Activated naive CD4-positive, alpha-beta T cell treated with anti-CD3 and anti-CD28 coated beads for 36 hours (primary cell): ENCODE measurements at regions of chr2 and their contacts with region 1.

Region 1: DNA sequence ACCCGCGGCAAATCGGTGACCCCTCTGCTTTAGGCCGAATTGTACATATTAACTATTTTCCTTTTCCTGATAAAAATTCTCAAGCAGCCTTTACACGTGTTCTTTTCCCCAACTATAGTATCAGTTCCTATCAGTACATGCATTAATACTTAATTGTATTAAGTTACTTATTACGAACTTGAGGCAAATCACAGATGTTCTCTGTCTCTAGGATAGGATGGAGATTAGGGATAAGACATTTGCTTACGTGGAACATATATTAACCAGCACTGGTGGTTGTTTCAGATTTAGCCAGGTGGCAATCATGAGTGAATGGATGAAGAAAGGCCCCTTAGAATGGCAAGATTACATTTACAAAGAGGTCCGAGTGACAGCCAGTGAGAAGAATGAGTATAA is 675 bp downstream of the GEMIN6 start:
- DNase-seq: no peak
- H3K4me3 Mint-ChIP-seq: peak overlapping the region; percentile 95
- H3K27ac Mint-ChIP-seq: peak overlapping the region; percentile 89
- H3K4me1 Mint-ChIP-seq: peaks cover 11% of the 10 kb centered on the region
- H3K27me3 Mint-ChIP-seq: peaks cover 10% of the 10 kb centered on the region

Region 2: GRCh38 chr2:38535744-38536506 is 242.8 kb before region 1 on chr2:
- CTCF ChIA-PET with region 1: no interaction called
- intact Hi-C with region 1: loop called (anchors 1 kb)
- DNase-seq: peak; percentile 84
- H3K4me3 Mint-ChIP-seq: peak overlapping the region; percentile 54
- H3K27ac Mint-ChIP-seq: no peak overlapping the region
- H3K4me1 Mint-ChIP-seq: no peaks in the 10 kb centered on the region
- H3K27me3 Mint-ChIP-seq: peaks cover 5% of the 10 kb centered on the region

Region 3: GRCh38 chr2:38765149-38765548 is 13.5 kb before region 1 on chr2:
- CTCF ChIA-PET with region 1: no interaction called
- intact Hi-C with region 1: no loop called
- DNase-seq: no peak
- H3K4me3 Mint-ChIP-seq: no peak overlapping the region
- H3K27ac Mint-ChIP-seq: no peak overlapping the region
- H3K4me1 Mint-ChIP-seq: peaks cover 1% of the 10 kb centered on the region
- H3K27me3 Mint-ChIP-seq: no peaks in the 10 kb centered on the region

Region 4: GRCh38 chr2:38875576-38876367 is 97.1 kb after region 1 on chr2 and contains the starts of genes DHX57 and MORN2:
- CTCF ChIA-PET with region 1: no interaction called
- intact Hi-C with region 1: loop called (anchors 1 kb)
- DNase-seq: peak; percentile 88
- H3K4me3 Mint-ChIP-seq: peak within 1 kb of the TSS; percentile 85
- H3K27ac Mint-ChIP-seq: peak within 1 kb of the TSS; percentile 77
- H3K4me1 Mint-ChIP-seq: peaks cover 24% of the 10 kb centered on the region
- H3K27me3 Mint-ChIP-seq: no peaks in the 10 kb centered on the region
- total RNA-seq, gene DHX57: 10.8 to 12.5 TPM
- total RNA-seq, gene MORN2: 5.1 to 6.2 TPM